Esophagus muscularis mucosa (tissue), 4 donors: ENCODE measurements at regions of chr9 and their contacts with region 1.

Region 1: DNA sequence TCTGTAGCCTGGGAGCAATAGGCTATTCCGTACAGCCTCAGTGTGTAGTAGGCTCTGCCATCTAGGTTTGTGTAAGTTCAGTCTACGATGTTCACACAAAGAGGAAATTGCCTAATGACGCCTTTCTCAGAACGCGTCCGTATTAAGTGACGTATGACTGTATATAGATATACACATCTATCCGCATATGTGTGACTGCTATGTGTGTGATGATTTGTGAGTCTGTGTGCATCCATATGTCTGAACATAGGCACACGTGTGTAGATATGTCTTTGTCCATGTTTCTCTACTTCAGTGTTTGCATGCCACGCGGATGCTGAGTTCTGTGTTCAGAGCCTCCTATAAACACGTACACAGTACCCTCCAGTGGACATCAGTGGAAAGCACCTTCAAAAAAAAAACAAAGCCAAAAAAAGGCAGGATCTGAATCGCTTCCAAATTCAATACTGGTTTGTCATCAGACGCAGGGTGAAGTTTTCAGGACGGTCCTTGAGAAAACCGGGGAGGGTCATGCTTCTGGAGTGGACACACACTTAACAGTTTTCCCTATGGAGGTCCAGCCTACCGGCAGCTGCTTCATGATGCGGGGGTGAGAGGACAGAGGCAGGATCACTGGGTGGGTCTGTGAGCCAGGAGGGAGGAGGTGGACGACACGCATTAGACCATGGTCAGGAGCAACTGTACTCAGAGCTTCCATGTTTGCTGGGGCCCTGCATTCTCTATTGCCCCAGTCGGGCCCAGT is 29.5 kb upstream of the ALDH1B1 start:
- DNase-seq: no peak
- H3K4me3 ChIP-seq: peak overlapping the region in 2 of 4 donors; percentile 13 to 24
- H3K27ac ChIP-seq: no peak overlapping the region
- H3K4me1 ChIP-seq: peaks cover 0 to 30% (median 27%) of the 10 kb centered on the region in 4 donors
- H3K27me3 ChIP-seq: no peaks in the 10 kb centered on the region
- CTCF ChIP-seq: peak; percentile 58 to 61 (median 59)
- EP300 ChIP-seq: no peak
- POLR2A ChIP-seq: no peak

Region 2: DNA sequence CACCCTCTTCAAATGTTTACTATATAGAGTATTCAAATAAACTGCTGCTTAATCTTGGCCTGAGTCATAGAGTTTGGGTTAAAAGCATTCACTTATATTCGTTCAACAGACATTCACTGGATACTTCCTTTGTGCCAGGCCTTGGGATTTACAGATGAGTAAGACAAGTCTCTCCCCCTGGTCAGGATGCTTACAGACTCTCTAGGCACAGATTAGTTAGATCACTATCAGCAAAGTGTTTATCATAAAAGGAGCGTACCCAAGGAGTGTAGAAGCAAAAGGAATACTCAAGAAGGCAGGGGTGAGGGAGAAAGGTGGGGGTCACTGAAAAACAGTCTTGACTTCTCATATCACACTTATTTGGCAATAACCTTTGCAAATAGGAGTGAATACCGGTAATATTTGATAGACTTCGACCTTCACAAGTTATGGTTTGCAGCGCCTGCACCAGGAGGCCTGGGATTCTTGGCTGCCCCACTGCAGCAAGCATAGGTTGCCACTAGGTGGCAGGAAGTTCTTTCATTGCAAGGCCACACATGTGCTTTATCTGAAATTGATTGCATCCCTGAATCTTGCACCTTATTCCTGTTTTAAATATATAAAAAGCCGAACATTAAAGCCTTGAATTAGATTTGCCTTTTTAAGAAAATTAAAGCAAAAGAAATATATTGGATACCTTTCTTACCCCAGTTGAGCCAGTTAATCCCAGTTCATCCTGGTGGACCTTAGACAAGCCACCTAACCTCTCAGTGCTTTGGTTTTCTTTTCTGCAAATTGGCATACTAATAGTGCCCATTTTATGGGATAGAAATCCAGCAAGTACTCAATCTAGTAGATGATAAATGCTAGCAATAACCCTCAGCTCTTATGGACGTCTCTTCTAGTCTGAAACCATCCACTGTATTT is 615.9 kb before region 1 on chr9:
- intact Hi-C with region 1: loop called (anchors 10 kb)
- DNase-seq: no peak
- H3K4me3 ChIP-seq: no peak overlapping the region
- H3K27ac ChIP-seq: no peak overlapping the region
- H3K4me1 ChIP-seq: no peaks in the 10 kb centered on the region
- H3K27me3 ChIP-seq: no peaks in the 10 kb centered on the region
- CTCF ChIP-seq: peak; percentile 71 to 94 (median 72)
- EP300 ChIP-seq: no peak
- POLR2A ChIP-seq: no peak

Region 3: GRCh38 chr9:38088006-38088925 is 274.8 kb before region 1 on chr9:
- intact Hi-C with region 1: loop called (anchors 5 kb)
- DNase-seq: peak; percentile 96
- H3K4me3 ChIP-seq: no peak overlapping the region
- H3K27ac ChIP-seq: no peak overlapping the region
- H3K4me1 ChIP-seq: peaks cover 3 to 10% (median 7%) of the 10 kb centered on the region in 4 donors
- H3K27me3 ChIP-seq: no peaks in the 10 kb centered on the region
- CTCF ChIP-seq: peak; percentile 89 to 99 (median 95)
- EP300 ChIP-seq: no peak
- POLR2A ChIP-seq: no peak

Region 4: DNA sequence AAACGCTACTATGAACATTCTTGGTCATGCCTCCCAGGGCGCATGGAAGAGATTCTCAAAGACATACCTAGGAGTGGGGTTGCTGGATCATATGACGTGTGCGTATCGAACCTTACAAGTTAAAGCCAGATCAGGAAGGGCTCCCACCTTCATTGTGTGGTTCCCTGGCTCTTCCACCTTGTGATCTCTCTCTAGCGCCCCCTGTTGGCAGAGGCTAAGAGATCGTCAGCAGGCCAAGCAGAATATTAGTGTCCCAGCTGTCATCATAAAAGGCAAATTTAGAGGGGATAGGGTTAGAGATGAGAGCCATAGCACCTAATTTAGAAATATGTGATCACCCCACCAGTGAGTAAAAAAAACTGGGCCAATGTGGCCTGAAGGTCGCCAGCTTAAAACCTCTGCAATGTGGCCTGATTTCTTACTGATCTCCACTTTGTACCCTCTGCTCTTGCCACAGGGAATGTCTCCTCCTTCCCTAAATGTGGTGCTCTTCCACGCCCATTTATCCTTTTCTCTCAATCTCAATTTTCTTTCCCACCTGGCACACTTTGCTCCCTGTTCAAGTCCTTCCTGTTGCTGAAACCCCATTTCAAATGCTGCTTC is 202.3 kb before region 1 on chr9:
- intact Hi-C with region 1: loop called (anchors 5 kb)
- DNase-seq: no peak
- H3K4me3 ChIP-seq: no peak overlapping the region
- H3K27ac ChIP-seq: no peak overlapping the region
- H3K4me1 ChIP-seq: no peaks in the 10 kb centered on the region
- H3K27me3 ChIP-seq: no peaks in the 10 kb centered on the region
- CTCF ChIP-seq: peak; percentile 66 to 81 (median 74)
- EP300 ChIP-seq: no peak
- POLR2A ChIP-seq: no peak

Region 5: DNA sequence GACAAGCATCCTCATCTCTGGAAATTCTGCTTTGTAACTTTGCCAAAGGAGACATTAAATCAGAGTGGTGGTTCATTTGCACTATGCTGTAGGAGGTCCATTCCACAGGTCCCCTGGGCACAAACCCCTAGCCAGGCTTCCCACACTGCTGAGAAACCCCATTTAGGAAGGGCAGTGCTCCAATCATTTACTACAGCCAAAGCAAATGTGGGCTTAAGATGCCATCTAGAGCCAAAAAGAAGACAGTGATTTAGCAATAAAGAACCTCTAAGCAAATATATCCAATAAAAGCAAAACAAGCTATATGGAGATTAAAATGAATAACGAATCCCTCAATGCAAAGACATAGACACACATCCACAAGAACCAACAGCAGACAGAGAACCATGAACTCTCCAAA is 99.5 kb before region 1 on chr9:
- intact Hi-C with region 1: no loop called
- DNase-seq: no peak
- H3K4me3 ChIP-seq: no peak overlapping the region
- H3K27ac ChIP-seq: no peak overlapping the region
- H3K4me1 ChIP-seq: no peaks in the 10 kb centered on the region
- H3K27me3 ChIP-seq: no peaks in the 10 kb centered on the region
- CTCF ChIP-seq: no peak
- EP300 ChIP-seq: no peak
- POLR2A ChIP-seq: no peak

Region 6: GRCh38 chr9:38284588-38285051 is 78.4 kb before region 1 on chr9:
- intact Hi-C with region 1: no loop called
- DNase-seq: peak; percentile 91
- H3K4me3 ChIP-seq: no peak overlapping the region
- H3K27ac ChIP-seq: no peak overlapping the region
- H3K4me1 ChIP-seq: no peaks in the 10 kb centered on the region
- H3K27me3 ChIP-seq: no peaks in the 10 kb centered on the region
- CTCF ChIP-seq: no peak
- EP300 ChIP-seq: no peak
- POLR2A ChIP-seq: no peak